ENCODE measurements at regions of chr19 and their contacts with region 1.

Region 1: DNA sequence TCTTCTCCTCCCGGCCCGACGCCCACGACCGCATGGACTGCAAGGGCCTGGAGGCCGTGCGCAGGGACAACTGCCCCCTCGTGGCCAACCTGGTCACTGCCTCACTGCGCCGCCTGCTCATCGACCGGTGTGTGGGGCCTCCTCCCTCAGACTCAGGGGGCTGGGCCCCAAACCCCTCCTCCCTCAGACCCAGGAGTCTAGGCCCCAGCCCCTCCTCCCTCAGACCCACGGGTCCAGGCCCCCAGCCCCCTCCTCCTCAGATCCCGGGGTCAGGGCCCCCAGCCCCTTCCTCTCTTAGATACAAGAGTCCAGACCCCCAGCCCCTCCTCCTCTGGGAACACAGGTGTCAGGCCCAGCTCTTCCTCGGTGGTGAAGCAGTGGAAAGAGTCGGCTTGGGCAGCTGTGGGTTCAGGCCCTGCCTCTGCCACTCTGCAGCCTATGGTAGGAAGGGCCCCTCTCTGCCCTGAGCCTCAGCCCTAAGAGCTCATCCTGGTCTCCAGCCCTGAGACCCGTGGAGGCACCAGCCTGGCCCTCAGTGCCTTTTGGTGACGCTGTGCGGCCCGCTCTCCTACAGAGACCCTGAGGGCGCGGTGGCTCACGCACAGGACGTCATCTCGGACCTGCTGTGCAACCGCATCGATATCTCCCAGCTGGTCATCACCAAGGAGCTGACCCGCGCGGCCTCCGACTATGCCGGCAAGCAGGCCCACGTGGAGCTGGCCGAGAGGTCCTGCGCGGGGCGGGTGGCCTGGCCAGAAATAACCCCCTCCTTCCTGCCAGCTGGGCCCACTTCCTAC is 3.7 kb upstream of the SPIB start:
- DNase-seq: peak; percentile 60 to 85 (median 77)
- H3K4me3 ChIP-seq: no peak overlapping the region
- H3K27ac ChIP-seq: no peak overlapping the region
- H3K4me1 ChIP-seq: peaks cover 2% of the 10 kb centered on the region
- H3K27me3 ChIP-seq: no peaks in the 10 kb centered on the region
- CTCF ChIP-seq: peak; percentile 70 to 78 (median 78)
- EP300 ChIP-seq: no peak
- POLR2A ChIP-seq: no peak

Region 2: GRCh38 chr19:50147462-50148423 is 267.3 kb before region 1 on chr19:
- intact Hi-C with region 1: loop called in 1 of 4 experiments (anchors 10 kb)
- DNase-seq: peak; percentile 84 to 91 (median 86)
- H3K4me3 ChIP-seq: peak overlapping the region; percentile 72
- H3K27ac ChIP-seq: peak overlapping the region; percentile 54 to 78
- H3K4me1 ChIP-seq: no peaks in the 10 kb centered on the region
- H3K27me3 ChIP-seq: no peaks in the 10 kb centered on the region
- CTCF ChIP-seq: peak; percentile 21 to 38 (median 33)
- EP300 ChIP-seq: no peak
- POLR2A ChIP-seq: peak; percentile 23

Region 3: GRCh38 chr19:50357178-50358100 is 57.6 kb before region 1 on chr19:
- intact Hi-C with region 1: loop called in 2 of 4 experiments (anchors 5 to 10 kb)
- DNase-seq: peak; percentile 69 to 88 (median 85)
- H3K4me3 ChIP-seq: peak overlapping the region; percentile 46
- H3K27ac ChIP-seq: peak overlapping the region; percentile 63 to 74
- H3K4me1 ChIP-seq: peaks cover 2% of the 10 kb centered on the region
- H3K27me3 ChIP-seq: no peaks in the 10 kb centered on the region
- CTCF ChIP-seq: peak; percentile 83 to 90 (median 88)
- EP300 ChIP-seq: no peak
- POLR2A ChIP-seq: no peak

Region 4: GRCh38 chr19:50383852-50384684 is 31.0 kb before region 1 on chr19 and contains the start of gene POLD1:
- intact Hi-C with region 1: no loop called
- DNase-seq: peak; percentile 97 to 99 (median 98)
- H3K4me3 ChIP-seq: peak within 1 kb of the TSS; percentile 60
- H3K27ac ChIP-seq: peak within 1 kb of the TSS; percentile 58 to 80
- H3K4me1 ChIP-seq: peaks cover 2% of the 10 kb centered on the region
- H3K27me3 ChIP-seq: no peaks in the 10 kb centered on the region
- CTCF ChIP-seq: no peak
- EP300 ChIP-seq: peak; percentile 23
- POLR2A ChIP-seq: peak; percentile 20
- total RNA-seq, gene POLD1: 7.5 to 25.2 (median 20.3) TPM

Region 5: DNA sequence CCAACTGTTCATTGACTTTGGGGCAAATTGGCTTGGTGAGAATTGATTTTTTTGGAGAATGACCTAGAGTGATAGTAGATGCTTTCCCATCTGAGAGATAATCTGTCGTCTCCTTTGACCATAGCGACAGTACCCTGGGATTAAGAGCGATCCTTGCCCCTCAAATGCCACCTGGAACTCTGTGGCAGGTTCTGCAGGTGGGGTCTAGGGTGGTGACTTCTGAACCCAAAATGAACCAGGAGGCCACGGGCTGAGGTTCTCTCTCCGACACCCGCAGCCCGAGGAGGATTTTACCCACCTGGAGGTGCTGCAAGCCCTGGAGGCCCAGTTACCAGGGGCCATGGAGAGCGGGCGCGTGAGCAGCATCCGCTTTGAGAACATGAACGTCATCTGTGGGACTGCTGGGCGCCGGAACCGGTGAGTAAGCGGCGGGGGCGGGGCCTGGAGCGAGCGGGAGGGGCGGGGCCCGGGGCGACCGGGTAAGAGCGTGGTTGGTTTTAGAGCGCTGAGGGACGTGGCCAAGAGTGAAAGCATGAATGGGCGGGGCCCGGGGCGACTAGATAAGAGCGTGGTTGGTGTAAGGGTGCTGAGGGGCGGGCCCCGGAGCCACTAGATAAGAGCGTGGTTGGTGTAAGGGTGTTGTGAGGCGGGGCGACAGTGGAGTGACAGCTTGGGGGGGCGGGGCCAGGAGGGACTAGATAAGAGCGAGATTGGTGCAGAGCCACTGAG is 242.8 kb after region 1 on chr19:
- intact Hi-C with region 1: no loop called
- DNase-seq: peak; percentile 52 to 85 (median 65)
- H3K4me3 ChIP-seq: no peak overlapping the region
- H3K27ac ChIP-seq: no peak overlapping the region
- H3K4me1 ChIP-seq: peaks cover 5% of the 10 kb centered on the region
- H3K27me3 ChIP-seq: no peaks in the 10 kb centered on the region
- CTCF ChIP-seq: no peak
- EP300 ChIP-seq: no peak
- POLR2A ChIP-seq: no peak